Naive thymus-derived CD4-positive, alpha-beta T cell (primary cell): ENCODE measurements at regions of chr7 and their contacts with region 1.

Region 1: GRCh38 chr7:140479062-140479738 is at the start of gene MKRN1:
- DNase-seq: peak; percentile 87 to 93 (median 92)
- ATAC-seq: peak; percentile 93
- H3K4me3 ChIP-seq: peak within 1 kb of the TSS; percentile 84
- H3K4me3 Mint-ChIP-seq: peak within 1 kb of the TSS; percentile 90 to 100 (median 98)
- H3K27ac ChIP-seq: peak within 1 kb of the TSS; percentile 89
- H3K27ac Mint-ChIP-seq: peak within 1 kb of the TSS; percentile 92 to 99 (median 99)
- H3K4me1 ChIP-seq: peaks cover 21 to 28% of the 10 kb centered on the region in 2 donors
- H3K4me1 Mint-ChIP-seq: peaks cover 13 to 35% (median 25%) of the 10 kb centered on the region in 7 donors
- H3K27me3 ChIP-seq: no peaks in the 10 kb centered on the region
- H3K27me3 Mint-ChIP-seq: peaks cover 0 to 15% (median 0%) of the 10 kb centered on the region in 5 donors
- total RNA-seq, gene MKRN1: 85.1 to 162 (median 144) TPM

Region 2: DNA sequence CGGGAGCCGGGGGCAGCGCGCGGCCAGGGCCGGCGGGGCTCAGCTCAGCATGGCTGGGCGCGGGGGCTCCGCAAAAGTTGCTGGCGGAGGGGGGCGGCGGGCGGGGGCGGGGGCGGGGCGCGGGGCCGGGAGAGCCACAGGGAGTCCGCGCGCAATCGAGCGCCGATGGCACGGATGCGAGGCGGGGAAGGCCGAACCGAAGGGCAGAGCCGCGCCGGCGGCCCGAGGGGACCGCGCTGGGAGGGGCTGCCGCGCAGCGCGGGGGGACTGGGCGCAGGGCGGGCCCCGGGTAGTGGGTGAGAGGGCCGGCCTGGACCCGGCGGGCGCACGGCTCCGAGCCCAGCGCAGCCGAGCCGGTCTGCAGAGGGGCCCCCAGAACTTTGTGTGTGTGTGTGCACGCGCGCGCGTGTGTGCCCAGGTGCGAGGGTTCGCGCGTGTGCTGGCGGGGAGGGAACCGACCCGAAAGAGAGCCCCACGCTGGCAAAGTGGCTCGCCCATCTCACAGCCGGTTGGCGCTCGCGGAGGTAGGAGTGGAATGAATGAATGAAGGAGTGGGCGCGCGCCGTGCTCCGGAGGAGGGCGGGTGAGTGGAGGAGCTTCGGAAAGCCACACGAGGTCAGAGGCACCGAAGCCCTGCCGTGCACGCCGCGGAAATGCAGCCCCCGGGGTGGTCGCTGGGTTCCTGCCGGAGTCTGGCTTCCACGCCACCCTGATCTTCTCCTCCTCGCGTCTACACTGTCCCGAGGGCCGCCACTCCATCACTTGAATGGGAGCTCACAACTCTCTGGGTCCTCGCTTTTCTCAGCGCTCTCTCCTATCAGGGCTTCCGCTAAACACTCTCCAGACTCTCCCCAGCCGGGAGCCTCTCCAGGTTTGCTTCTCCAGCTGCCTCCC is 701.0 kb before region 1 on chr7 and contains the start of gene HIPK2:
- CTCF ChIA-PET with region 1: no interaction called
- POLR2A ChIA-PET with region 1: no interaction called
- intact Hi-C with region 1: loop called in 1 of 2 experiments (anchors 10 kb)
- DNase-seq: peak; percentile 54 to 75 (median 67)
- ATAC-seq: peak; percentile 79
- H3K4me3 ChIP-seq: peak within 1 kb of the TSS; percentile 85
- H3K4me3 Mint-ChIP-seq: peak within 1 kb of the TSS; percentile 94 to 100 (median 98)
- H3K27ac ChIP-seq: peak within 1 kb of the TSS; percentile 89
- H3K27ac Mint-ChIP-seq: peak within 1 kb of the TSS; percentile 95 to 98 (median 97)
- H3K4me1 ChIP-seq: peaks cover 4 to 26% of the 10 kb centered on the region in 2 donors
- H3K4me1 Mint-ChIP-seq: peaks cover 41 to 53% (median 49%) of the 10 kb centered on the region in 7 donors
- H3K27me3 ChIP-seq: no peaks in the 10 kb centered on the region
- H3K27me3 Mint-ChIP-seq: peaks cover 0 to 24% (median 5%) of the 10 kb centered on the region in 5 donors
- total RNA-seq, gene HIPK2: 27.3 to 44.0 (median 37.3) TPM

Region 3: DNA sequence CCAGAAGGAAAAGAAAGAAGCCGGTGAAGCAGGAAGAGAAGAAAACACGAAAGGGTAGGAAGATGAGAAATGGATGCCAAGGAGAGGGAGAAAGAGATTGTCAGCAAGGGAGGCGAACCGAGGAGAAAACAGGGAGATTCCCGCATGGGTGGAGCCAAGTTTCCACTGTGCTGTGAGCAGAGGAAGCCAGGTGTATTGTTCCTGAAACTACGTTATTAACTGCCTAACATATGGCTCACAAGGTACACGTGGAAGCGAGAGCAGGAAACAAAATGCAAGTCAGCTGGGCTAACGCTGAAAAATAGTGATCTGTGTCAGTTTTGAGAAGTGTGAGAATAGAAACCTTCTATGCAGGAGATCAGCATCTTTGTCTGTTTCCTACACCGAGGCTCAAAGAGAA is 681.0 kb before region 1 on chr7:
- CTCF ChIA-PET with region 1: no interaction called
- POLR2A ChIA-PET with region 1: no interaction called
- intact Hi-C with region 1: no loop called
- DNase-seq: no peak
- ATAC-seq: no peak
- H3K4me3 ChIP-seq: no peak overlapping the region
- H3K4me3 Mint-ChIP-seq: peak overlapping the region in 4 of 10 donors; percentile 4 to 39 (median 14)
- H3K27ac ChIP-seq: no peak overlapping the region
- H3K27ac Mint-ChIP-seq: peak overlapping the region in 2 of 9 donors; percentile 2 to 37
- H3K4me1 ChIP-seq: no peaks in the 10 kb centered on the region
- H3K4me1 Mint-ChIP-seq: peaks cover 5 to 19% (median 10%) of the 10 kb centered on the region in 7 donors
- H3K27me3 ChIP-seq: no peaks in the 10 kb centered on the region
- H3K27me3 Mint-ChIP-seq: peaks cover 0 to 7% (median 0%) of the 10 kb centered on the region in 5 donors

Region 4: DNA sequence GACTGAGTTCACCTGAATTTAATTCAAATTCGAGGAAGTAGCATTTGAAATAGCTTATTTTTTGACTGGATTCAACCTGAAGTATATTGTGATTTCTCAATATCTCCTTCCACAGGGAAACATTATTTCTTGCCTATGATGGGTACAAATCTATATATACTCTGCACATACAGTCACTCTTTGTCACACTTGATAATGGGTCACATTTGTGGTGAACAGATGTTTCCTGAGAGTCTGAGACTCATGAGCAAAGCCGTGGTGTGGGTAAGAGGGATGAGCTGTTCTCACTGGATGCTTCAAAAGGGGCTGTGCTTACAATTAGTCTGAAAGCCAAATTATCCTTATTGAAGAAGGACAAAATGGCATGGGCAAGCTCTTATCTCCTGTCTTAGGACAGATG is 668.1 kb before region 1 on chr7:
- CTCF ChIA-PET with region 1: no interaction called
- POLR2A ChIA-PET with region 1: no interaction called
- intact Hi-C with region 1: no loop called
- DNase-seq: no peak
- ATAC-seq: peak; percentile 27
- H3K4me3 ChIP-seq: no peak overlapping the region
- H3K4me3 Mint-ChIP-seq: no peak overlapping the region
- H3K27ac ChIP-seq: no peak overlapping the region
- H3K27ac Mint-ChIP-seq: no peak overlapping the region
- H3K4me1 ChIP-seq: no peaks in the 10 kb centered on the region
- H3K4me1 Mint-ChIP-seq: peaks cover 5 to 16% (median 8%) of the 10 kb centered on the region in 7 donors
- H3K27me3 ChIP-seq: no peaks in the 10 kb centered on the region
- H3K27me3 Mint-ChIP-seq: peaks cover 0 to 16% (median 2%) of the 10 kb centered on the region in 5 donors

Region 5: GRCh38 chr7:140375892-140376730 is 103.1 kb before region 1 on chr7:
- CTCF ChIA-PET with region 1: no interaction called
- POLR2A ChIA-PET with region 1: interaction called, 20 read pairs
- intact Hi-C with region 1: loop called in 1 of 2 experiments (anchors 1 kb)
- DNase-seq: peak in 8 of 9 donors; percentile 34 to 71 (median 56)
- ATAC-seq: peak; percentile 89
- H3K4me3 ChIP-seq: peak overlapping the region; percentile 58
- H3K4me3 Mint-ChIP-seq: peak overlapping the region; percentile 67 to 92 (median 84)
- H3K27ac ChIP-seq: peak overlapping the region; percentile 75
- H3K27ac Mint-ChIP-seq: peak overlapping the region; percentile 87 to 97 (median 93)
- H3K4me1 ChIP-seq: peaks cover 6 to 10% of the 10 kb centered on the region in 2 donors
- H3K4me1 Mint-ChIP-seq: peaks cover 0 to 48% (median 20%) of the 10 kb centered on the region in 7 donors
- H3K27me3 ChIP-seq: no peaks in the 10 kb centered on the region
- H3K27me3 Mint-ChIP-seq: no peaks in the 10 kb centered on the region

Region 6: GRCh38 chr7:140653319-140654108 is 174.3 kb after region 1 on chr7:
- CTCF ChIA-PET with region 1: interaction called, 16 read pairs
- POLR2A ChIA-PET with region 1: no interaction called
- intact Hi-C with region 1: loop called (anchors 1 kb)
- DNase-seq: peak in 5 of 9 donors; percentile 23 to 55 (median 41)
- ATAC-seq: peak; percentile 55
- H3K4me3 ChIP-seq: no peak overlapping the region
- H3K4me3 Mint-ChIP-seq: peak overlapping the region in 4 of 10 donors; percentile 21 to 42 (median 34)
- H3K27ac ChIP-seq: no peak overlapping the region
- H3K27ac Mint-ChIP-seq: peak overlapping the region in 2 of 9 donors; percentile 16 to 63
- H3K4me1 ChIP-seq: peaks cover 0 to 9% of the 10 kb centered on the region in 2 donors
- H3K4me1 Mint-ChIP-seq: peaks cover 6 to 26% (median 21%) of the 10 kb centered on the region in 7 donors
- H3K27me3 ChIP-seq: no peaks in the 10 kb centered on the region
- H3K27me3 Mint-ChIP-seq: peaks cover 5 to 40% (median 14%) of the 10 kb centered on the region in 5 donors

Region 7: GRCh38 chr7:140924019-140924820 is 445.0 kb after region 1 on chr7:
- CTCF ChIA-PET with region 1: no interaction called
- POLR2A ChIA-PET with region 1: no interaction called
- intact Hi-C with region 1: loop called (anchors 1 to 2 kb)
- DNase-seq: peak; percentile 61 to 89 (median 70)
- ATAC-seq: peak; percentile 84
- H3K4me3 ChIP-seq: peak overlapping the region; percentile 85
- H3K4me3 Mint-ChIP-seq: peak overlapping the region in 1 of 10 donors; percentile 89
- H3K27ac ChIP-seq: peak overlapping the region; percentile 100
- H3K27ac Mint-ChIP-seq: peak overlapping the region in 3 of 9 donors; percentile 92 to 99 (median 94)
- H3K4me1 ChIP-seq: peaks cover 9 to 18% of the 10 kb centered on the region in 2 donors
- H3K4me1 Mint-ChIP-seq: peaks cover 10 to 44% (median 22%) of the 10 kb centered on the region in 7 donors
- H3K27me3 ChIP-seq: no peaks in the 10 kb centered on the region
- H3K27me3 Mint-ChIP-seq: peaks cover 0 to 5% (median 0%) of the 10 kb centered on the region in 5 donors

Region 8: GRCh38 chr7:141737834-141738591 is 1258.8 kb after region 1 on chr7 and contains the start of gene SSBP1:
- CTCF ChIA-PET with region 1: no interaction called
- POLR2A ChIA-PET with region 1: no interaction called
- intact Hi-C with region 1: loop called (anchors 1 to 2 kb)
- DNase-seq: peak; percentile 72 to 95 (median 93)
- ATAC-seq: peak; percentile 94
- H3K4me3 ChIP-seq: peak within 1 kb of the TSS; percentile 84
- H3K4me3 Mint-ChIP-seq: peak within 1 kb of the TSS; percentile 92 to 100 (median 98)
- H3K27ac ChIP-seq: peak within 1 kb of the TSS; percentile 77
- H3K27ac Mint-ChIP-seq: peak within 1 kb of the TSS; percentile 95 to 99 (median 98)
- H3K4me1 ChIP-seq: peaks cover 21 to 22% of the 10 kb centered on the region in 2 donors
- H3K4me1 Mint-ChIP-seq: peaks cover 18 to 63% (median 56%) of the 10 kb centered on the region in 7 donors
- H3K27me3 ChIP-seq: no peaks in the 10 kb centered on the region
- H3K27me3 Mint-ChIP-seq: no peaks in the 10 kb centered on the region
- total RNA-seq, gene SSBP1: 86.4 to 148 (median 107) TPM